Ascending aorta (tissue), 2 donors: ENCODE measurements at regions of chr10 and their contacts with region 1.

Region 1: GRCh38 chr10:84264611-84265141 is 19.8 kb downstream of the RGR start:
- DNase-seq: peak in 1 of 2 donors; percentile 76
- H3K4me3 ChIP-seq: no peak overlapping the region
- H3K27ac ChIP-seq: no peak overlapping the region
- H3K4me1 ChIP-seq: no peaks in the 10 kb centered on the region
- H3K27me3 ChIP-seq: peaks cover 4% of the 10 kb centered on the region
- CTCF ChIP-seq: peak; percentile 76 to 95 (median 92)

Region 2: GRCh38 chr10:84308481-84309304 is 44.0 kb after region 1 on chr10:
- intact Hi-C with region 1: no loop called
- DNase-seq: no peak
- H3K4me3 ChIP-seq: no peak overlapping the region
- H3K27ac ChIP-seq: no peak overlapping the region
- H3K4me1 ChIP-seq: peaks cover 0 to 8% of the 10 kb centered on the region in 2 donors
- H3K27me3 ChIP-seq: no peaks in the 10 kb centered on the region
- CTCF ChIP-seq: no peak

Region 3: GRCh38 chr10:84352251-84352842 is 87.7 kb after region 1 on chr10:
- intact Hi-C with region 1: loop called (anchors 5 kb)
- DNase-seq: peak in 1 of 2 donors; percentile 72
- H3K4me3 ChIP-seq: no peak overlapping the region
- H3K27ac ChIP-seq: no peak overlapping the region
- H3K4me1 ChIP-seq: peaks cover 4 to 14% of the 10 kb centered on the region in 2 donors
- H3K27me3 ChIP-seq: no peaks in the 10 kb centered on the region
- CTCF ChIP-seq: peak; percentile 56 to 76 (median 59)

Region 4: DNA sequence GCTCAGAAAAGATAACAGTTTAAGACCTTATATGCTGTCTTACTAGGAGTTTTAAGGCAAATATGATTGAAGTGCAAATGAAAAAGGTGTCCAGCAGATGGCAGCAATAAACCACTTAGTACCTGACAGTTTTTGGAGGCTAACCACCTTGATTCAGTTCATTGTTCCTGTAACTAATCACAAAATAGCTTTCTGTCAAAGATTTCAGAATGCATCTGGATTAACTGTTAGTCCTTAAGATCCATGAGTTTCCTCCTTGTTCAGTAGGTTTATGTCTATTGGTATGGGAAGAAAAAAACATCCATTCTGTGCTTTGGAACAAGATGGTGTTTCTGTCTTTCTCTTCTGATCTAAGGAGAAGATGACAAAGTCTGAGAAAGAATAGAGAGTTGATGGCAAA is 110.3 kb after region 1 on chr10:
- intact Hi-C with region 1: loop called (anchors 1 kb)
- DNase-seq: peak in 1 of 2 donors; percentile 63
- H3K4me3 ChIP-seq: no peak overlapping the region
- H3K27ac ChIP-seq: no peak overlapping the region
- H3K4me1 ChIP-seq: no peaks in the 10 kb centered on the region
- H3K27me3 ChIP-seq: no peaks in the 10 kb centered on the region
- CTCF ChIP-seq: peak; percentile 46 to 76 (median 48)